Gastrocnemius medialis (tissue), 4 donors: ENCODE measurements at regions of chr2 and their contacts with region 1.

Region 1: DNA sequence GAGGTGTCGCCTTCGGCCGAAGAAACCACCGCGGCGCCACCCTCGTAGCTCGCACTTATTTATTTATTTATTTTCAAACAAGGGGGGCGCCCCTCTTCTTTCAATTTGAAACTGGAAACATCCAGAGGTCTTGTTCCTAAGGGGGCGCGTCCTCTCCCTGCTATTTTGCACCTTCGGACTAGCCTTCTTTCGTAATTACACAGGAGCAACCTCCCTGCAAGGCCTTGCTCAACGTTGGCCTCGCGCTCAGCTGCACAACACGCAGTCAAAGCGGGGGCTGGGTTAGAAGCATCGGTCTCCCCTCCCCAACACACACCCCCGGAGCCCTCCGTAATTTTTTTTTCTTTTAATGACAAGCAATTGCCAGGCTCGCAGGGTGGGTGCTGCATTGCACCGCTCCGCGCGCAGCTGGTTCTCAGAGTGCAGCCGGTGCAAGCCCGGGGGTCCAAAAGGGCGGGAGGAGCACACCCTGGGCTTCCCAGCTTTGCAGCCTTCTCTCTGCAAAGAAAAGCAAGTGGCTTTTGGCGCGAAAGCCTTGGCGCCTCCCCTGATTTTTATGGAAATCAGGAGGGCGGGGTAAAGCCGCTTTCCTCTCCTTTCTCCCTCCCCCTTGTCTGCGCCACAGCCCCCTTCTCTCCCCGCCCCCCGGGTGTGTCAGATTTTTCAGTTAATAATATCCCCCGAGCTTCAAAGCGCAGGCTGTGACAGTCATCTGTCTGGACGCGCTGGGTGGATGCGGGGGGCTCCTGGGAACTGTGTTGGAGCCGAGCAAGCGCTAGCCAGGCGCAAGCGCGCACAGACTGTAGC is at the start of gene MYCN:
- DNase-seq: peak; percentile 27 to 32
- ATAC-seq: peak; percentile 25 to 65
- H3K4me3 ChIP-seq: peak within 1 kb of the TSS; percentile 52 to 57 (median 56)
- H3K27ac ChIP-seq: no peak within 1 kb of the TSS
- H3K4me1 ChIP-seq: peaks cover 23 to 43% of the 10 kb centered on the region in 2 donors
- H3K27me3 ChIP-seq: peaks cover 21 to 36% (median 27%) of the 10 kb centered on the region in 3 donors
- CTCF ChIP-seq: peak; percentile 42 to 73 (median 52)
- POLR2A ChIP-seq: no peak
- total RNA-seq, gene MYCN: 0.17 to 0.25 TPM in 2 of 4 donors, not detected in the others

Region 2: GRCh38 chr2:16281451-16282336 is 341.6 kb after region 1 on chr2:
- in situ Hi-C with region 1: loop called (anchors 10 to 25 kb)
- intact Hi-C with region 1: loop called (anchors 1 kb)
- DNase-seq: no peak
- ATAC-seq: peak in 1 of 2 donors; percentile 39
- H3K4me3 ChIP-seq: no peak overlapping the region
- H3K27ac ChIP-seq: no peak overlapping the region
- H3K4me1 ChIP-seq: no peaks in the 10 kb centered on the region
- H3K27me3 ChIP-seq: no peaks in the 10 kb centered on the region
- CTCF ChIP-seq: peak in 2 of 5 experiments; percentile 43 to 54
- POLR2A ChIP-seq: no peak

Region 3: GRCh38 chr2:16487686-16488085 is 547.6 kb after region 1 on chr2:
- in situ Hi-C with region 1: loop called in 1 of 4 experiments (anchors 25 kb)
- intact Hi-C with region 1: loop called (anchors 1 kb)
- DNase-seq: no peak
- ATAC-seq: no peak
- H3K4me3 ChIP-seq: no peak overlapping the region
- H3K27ac ChIP-seq: no peak overlapping the region
- H3K4me1 ChIP-seq: no peaks in the 10 kb centered on the region
- H3K27me3 ChIP-seq: no peaks in the 10 kb centered on the region
- CTCF ChIP-seq: peak in 1 of 5 experiments; percentile 15
- POLR2A ChIP-seq: no peak

Region 4: GRCh38 chr2:16507655-16508489 is 567.8 kb after region 1 on chr2:
- in situ Hi-C with region 1: loop called in 2 of 4 experiments (anchors 10 to 25 kb)
- intact Hi-C with region 1: no loop called
- DNase-seq: peak in 1 of 2 donors; percentile 12
- ATAC-seq: peak in 1 of 2 donors; percentile 55
- H3K4me3 ChIP-seq: peak overlapping the region; percentile 0 to 52 (median 43)
- H3K27ac ChIP-seq: no peak overlapping the region
- H3K4me1 ChIP-seq: no peaks in the 10 kb centered on the region
- H3K27me3 ChIP-seq: peaks cover 3 to 21% (median 6%) of the 10 kb centered on the region in 3 donors
- CTCF ChIP-seq: peak; percentile 33 to 74 (median 49)
- POLR2A ChIP-seq: no peak

Region 5: DNA sequence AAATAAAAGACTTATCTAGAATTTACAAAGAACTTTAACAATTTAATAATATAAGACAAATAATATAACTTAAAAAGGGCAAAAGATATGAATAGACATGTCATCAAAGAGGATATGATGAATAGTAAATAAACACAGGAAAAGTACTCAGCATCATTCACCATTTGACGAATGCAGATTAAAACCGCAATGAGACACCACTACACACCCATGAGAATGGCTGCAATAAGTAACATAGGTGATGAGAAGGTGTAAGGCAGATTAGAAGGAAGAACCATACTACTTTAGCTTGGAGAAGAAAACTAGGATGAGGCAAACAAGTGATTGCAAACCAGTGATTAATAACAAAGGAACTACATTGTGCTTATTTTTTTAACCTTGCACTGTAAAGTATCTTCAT is 573.6 kb after region 1 on chr2:
- in situ Hi-C with region 1: loop called in 2 of 4 experiments (anchors 10 to 25 kb)
- intact Hi-C with region 1: no loop called
- DNase-seq: no peak
- ATAC-seq: no peak
- H3K4me3 ChIP-seq: no peak overlapping the region
- H3K27ac ChIP-seq: no peak overlapping the region
- H3K4me1 ChIP-seq: no peaks in the 10 kb centered on the region
- H3K27me3 ChIP-seq: peaks cover 0 to 5% (median 0%) of the 10 kb centered on the region in 3 donors
- CTCF ChIP-seq: no peak
- POLR2A ChIP-seq: no peak

Region 6: DNA sequence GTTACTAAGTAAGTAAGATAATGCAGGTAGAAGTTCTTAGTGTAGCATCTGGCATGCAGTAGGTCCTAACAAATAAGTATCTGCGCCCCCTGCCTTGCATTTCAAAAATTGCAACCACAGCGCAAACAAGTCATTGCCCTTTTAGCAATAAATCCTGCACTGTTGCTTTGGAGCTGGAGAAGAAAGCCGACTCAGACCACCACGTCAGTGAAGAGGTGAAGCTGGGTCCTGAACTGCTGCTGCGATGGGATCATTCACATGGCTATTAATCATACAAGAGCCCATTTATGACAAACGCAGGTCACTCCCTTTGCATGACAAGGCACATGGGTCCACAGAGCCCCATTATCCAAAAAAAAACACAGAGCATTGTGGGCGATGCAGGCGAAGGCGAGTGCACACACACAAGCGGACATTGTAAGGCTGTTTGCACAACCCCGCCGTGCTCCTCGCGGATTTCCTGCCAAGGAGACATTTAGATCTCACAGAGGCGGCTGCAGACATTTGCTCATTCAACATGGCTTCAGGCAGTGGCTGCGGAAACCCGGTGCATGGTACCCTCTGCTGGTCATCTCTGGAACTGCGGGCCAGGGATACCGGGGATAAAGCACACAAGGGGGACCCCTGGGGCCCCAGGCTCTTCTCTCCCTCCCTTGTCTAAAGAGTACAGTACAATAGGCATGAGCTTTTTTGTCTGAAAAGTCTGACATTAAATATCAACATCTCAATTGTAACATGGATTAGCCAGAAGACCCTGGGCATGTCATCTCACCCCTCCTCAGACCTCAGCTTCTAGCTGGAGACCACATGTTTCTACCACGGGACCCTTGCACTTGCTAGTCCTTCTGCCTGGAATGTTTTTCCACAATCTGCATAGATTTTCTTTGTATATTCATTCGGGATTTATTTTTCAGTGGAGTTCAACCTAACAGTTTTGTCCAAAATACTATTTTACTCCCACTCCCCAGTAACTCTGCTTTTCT is 668.9 kb after region 1 on chr2:
- in situ Hi-C with region 1: loop called in 1 of 4 experiments (anchors 25 kb)
- intact Hi-C with region 1: loop called (anchors 5 kb)
- DNase-seq: peak; percentile 61 to 75
- ATAC-seq: peak; percentile 80 to 88
- H3K4me3 ChIP-seq: peak overlapping the region; percentile 34 to 60 (median 46)
- H3K27ac ChIP-seq: peak overlapping the region in 2 of 4 donors; percentile 15 to 46
- H3K4me1 ChIP-seq: peaks cover 8 to 16% of the 10 kb centered on the region in 2 donors
- H3K27me3 ChIP-seq: no peaks in the 10 kb centered on the region
- CTCF ChIP-seq: peak; percentile 87 to 94 (median 93)
- POLR2A ChIP-seq: no peak